Tibial artery (tissue), 4 donors: ENCODE measurements at regions of chr1 and their contacts with region 1.

Region 1: DNA sequence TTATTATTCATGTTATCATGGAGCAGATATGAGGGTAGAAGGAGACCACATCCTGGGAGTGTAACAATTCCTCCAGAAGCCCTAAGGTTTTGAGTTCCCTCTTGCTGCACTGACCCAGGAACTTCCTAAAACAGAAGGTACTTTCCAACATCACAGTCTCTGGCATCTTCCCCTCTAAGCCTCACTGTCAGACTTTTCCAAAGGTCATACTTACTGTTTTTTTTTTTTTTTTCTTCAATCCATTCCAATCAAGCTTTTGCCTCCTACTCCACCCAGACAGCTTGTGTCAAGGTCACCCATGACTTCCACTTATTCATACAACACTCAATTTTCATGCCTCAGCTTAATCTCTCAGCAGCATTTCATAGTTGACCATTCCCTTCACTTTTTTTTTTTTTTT is 18.4 kb upstream of the UQCRHL start:
- DNase-seq: no peak
- H3K4me3 ChIP-seq: no peak overlapping the region
- H3K27ac ChIP-seq: peak overlapping the region; percentile 58 to 68
- H3K4me1 ChIP-seq: peaks cover 0 to 28% (median 9%) of the 10 kb centered on the region in 4 donors
- H3K27me3 ChIP-seq: no peaks in the 10 kb centered on the region
- CTCF ChIP-seq: no peak

Region 2: GRCh38 chr1:15963968-15964648 is 138.3 kb after region 1 on chr1:
- intact Hi-C with region 1: loop called (anchors 5 kb)
- DNase-seq: no peak
- H3K4me3 ChIP-seq: no peak overlapping the region
- H3K27ac ChIP-seq: peak overlapping the region; percentile 43 to 54
- H3K4me1 ChIP-seq: peaks cover 0 to 58% (median 22%) of the 10 kb centered on the region in 4 donors
- H3K27me3 ChIP-seq: no peaks in the 10 kb centered on the region
- CTCF ChIP-seq: no peak